ENCODE measurements at regions of chr20 and their contacts with region 1.

Region 1: DNA sequence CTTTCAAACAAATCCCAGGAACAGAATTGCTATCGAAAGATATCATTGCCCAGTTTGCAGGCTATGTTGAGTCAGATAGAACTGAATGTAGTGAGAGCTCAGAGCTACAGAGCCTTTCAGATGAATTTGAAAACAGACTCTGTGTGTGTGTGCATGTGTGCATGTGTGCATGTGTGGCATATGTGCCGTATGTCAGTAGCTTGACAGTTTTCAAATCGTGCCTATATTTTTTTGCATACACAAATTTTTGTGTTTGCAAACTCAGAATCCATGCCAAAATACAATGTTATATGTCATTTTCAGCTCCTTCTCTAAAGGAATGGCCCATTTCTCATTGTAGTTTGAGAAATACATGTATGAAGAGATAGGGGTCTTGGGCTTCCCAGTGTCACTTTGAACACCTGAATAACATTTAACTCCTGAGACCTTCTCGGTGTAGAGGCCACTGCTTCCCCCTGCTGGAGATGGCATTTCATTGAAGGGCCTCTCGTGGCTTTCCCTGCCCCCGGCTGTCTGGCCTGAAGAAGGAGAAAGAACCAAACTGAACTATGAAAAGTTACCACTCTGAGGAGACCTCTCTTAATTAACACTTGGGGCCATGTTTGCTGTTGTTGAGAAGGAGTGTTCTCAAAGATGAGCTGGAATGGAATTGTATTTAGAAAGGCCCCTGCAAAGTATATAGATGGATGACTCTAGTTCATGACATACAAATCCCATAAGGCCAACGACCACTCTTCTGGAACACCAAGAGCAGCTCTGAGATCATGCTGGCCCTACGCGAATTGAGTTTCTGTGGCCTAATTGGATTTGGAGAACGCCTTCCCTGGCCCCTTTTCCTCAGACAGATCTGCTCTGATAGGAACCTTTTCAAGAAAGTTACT is 58.7 kb downstream of the VAPB start:
- DNase-seq: peak; percentile 43 to 71 (median 62)
- H3K4me3 ChIP-seq: no peak overlapping the region
- H3K27ac ChIP-seq: no peak overlapping the region
- H3K4me1 ChIP-seq: peaks cover 0 to 3% (median 0%) of the 10 kb centered on the region in 4 experiments
- H3K27me3 ChIP-seq: no peaks in the 10 kb centered on the region

Region 2: DNA sequence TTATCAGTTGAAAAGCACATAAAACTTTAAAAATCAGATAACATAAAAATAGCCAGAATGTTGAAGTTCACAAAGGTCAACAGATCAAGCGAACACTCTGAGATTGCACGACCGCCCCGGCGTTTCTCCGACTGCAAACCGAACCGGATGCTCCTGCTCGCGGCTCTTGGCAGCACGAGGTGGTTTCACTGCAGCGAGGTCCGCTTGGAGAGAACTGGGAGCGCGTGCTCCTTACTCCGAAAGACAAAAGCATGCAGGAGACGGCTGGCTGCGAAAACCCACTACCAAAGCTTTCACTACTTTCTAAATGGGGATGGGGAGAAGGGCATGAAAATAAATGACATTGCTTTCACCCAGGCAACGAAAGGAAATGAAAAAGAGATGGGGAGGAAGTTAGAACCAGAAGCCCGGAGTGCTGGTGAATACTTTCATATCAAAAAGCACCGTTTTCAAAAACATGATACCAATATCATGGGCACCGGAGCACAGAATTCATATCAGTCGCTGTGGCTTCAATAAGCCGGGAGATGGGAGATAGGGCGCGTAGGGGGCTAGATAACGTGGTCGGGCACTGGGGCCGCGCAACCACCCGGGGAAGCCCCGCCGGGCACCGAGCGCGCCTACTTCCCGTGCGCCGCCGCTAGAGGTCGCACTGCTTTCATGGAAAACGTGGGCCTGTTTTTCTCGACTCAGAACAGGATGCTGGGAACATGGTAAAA is 211.0 kb before region 1 on chr20:
- CTCF ChIA-PET with region 1: interaction called, 32 read pairs
- POLR2A ChIA-PET with region 1: no interaction called
- DNase-seq: peak; percentile 56 to 76 (median 72)
- H3K4me3 ChIP-seq: peak overlapping the region; percentile 18 to 70 (median 64)
- H3K27ac ChIP-seq: no peak overlapping the region
- H3K4me1 ChIP-seq: peaks cover 1 to 12% (median 8%) of the 10 kb centered on the region in 4 experiments
- H3K27me3 ChIP-seq: peaks cover 0 to 3% (median 0%) of the 10 kb centered on the region in 5 experiments

Region 3: GRCh38 chr20:58246346-58246745 is 201.4 kb before region 1 on chr20:
- CTCF ChIA-PET with region 1: interaction called, 14 read pairs
- POLR2A ChIA-PET with region 1: no interaction called
- DNase-seq: no peak
- H3K4me3 ChIP-seq: no peak overlapping the region
- H3K27ac ChIP-seq: no peak overlapping the region
- H3K4me1 ChIP-seq: no peaks in the 10 kb centered on the region
- H3K27me3 ChIP-seq: no peaks in the 10 kb centered on the region

Region 4: GRCh38 chr20:58458180-58459057 is 10.7 kb after region 1 on chr20:
- CTCF ChIA-PET with region 1: interaction called, 11 read pairs
- POLR2A ChIA-PET with region 1: no interaction called
- DNase-seq: no peak
- H3K4me3 ChIP-seq: no peak overlapping the region
- H3K27ac ChIP-seq: no peak overlapping the region
- H3K4me1 ChIP-seq: no peaks in the 10 kb centered on the region
- H3K27me3 ChIP-seq: no peaks in the 10 kb centered on the region

Measured in common myeloid progenitor, CD34-positive (primary cell).